ENCODE measurements at regions of chr9 and their contacts with region 1.

Region 1: GRCh38 chr9:125505988-125506438 is 201.0 kb downstream of the MAPKAP1 start:
- DNase-seq: no peak
- H3K4me3 ChIP-seq: no peak overlapping the region
- H3K27ac ChIP-seq: no peak overlapping the region
- H3K27me3 ChIP-seq: no peaks in the 10 kb centered on the region
- CTCF ChIP-seq: no peak

Region 2: DNA sequence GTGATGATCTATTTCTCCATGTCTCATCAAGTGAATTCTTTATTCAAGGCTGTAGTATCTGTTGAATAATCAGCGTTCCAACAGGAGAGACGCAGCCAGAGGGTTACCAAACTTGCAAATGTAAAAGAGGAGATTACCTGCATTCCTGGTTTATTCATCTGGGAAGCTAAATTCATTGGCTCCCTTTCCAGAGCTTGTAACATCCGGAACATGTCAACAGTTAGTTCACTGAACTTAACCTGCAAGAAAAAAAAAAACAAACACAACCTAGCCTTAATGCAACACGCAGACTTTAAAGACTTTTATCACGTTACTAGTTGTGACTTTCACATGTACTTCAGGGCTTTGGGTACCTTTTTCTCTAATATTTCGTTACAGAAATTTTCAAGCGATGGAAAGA is 502.7 kb before region 1 on chr9:
- CTCF ChIA-PET with region 1: interaction called, 10 read pairs
- POLR2A ChIA-PET with region 1: no interaction called
- DNase-seq: no peak
- H3K4me3 ChIP-seq: no peak overlapping the region
- H3K27ac ChIP-seq: no peak overlapping the region
- H3K27me3 ChIP-seq: no peaks in the 10 kb centered on the region
- CTCF ChIP-seq: no peak

Measured in AG04450 (cell line).